Sigmoid colon (tissue), 7 donors: ENCODE measurements at regions of chr5 and their contacts with region 1.

Region 1: GRCh38 chr5:77491783-77492652 is at the start of gene WDR41:
- DNase-seq: peak; percentile 95
- H3K4me3 ChIP-seq: peak within 1 kb of the TSS; percentile 67 to 82 (median 76)
- H3K27ac ChIP-seq: peak within 1 kb of the TSS; percentile 85 to 97 (median 94)
- H3K4me1 ChIP-seq: peaks cover 0 to 13% (median 7%) of the 10 kb centered on the region in 4 donors
- H3K27me3 ChIP-seq: no peaks in the 10 kb centered on the region
- CTCF ChIP-seq: peak; percentile 55 to 96 (median 72)
- EP300 ChIP-seq: no peak
- POLR2A ChIP-seq: peak; percentile 16 to 42
- total RNA-seq, gene WDR41: 36.8 to 65.6 (median 50.2) TPM

Region 2: DNA sequence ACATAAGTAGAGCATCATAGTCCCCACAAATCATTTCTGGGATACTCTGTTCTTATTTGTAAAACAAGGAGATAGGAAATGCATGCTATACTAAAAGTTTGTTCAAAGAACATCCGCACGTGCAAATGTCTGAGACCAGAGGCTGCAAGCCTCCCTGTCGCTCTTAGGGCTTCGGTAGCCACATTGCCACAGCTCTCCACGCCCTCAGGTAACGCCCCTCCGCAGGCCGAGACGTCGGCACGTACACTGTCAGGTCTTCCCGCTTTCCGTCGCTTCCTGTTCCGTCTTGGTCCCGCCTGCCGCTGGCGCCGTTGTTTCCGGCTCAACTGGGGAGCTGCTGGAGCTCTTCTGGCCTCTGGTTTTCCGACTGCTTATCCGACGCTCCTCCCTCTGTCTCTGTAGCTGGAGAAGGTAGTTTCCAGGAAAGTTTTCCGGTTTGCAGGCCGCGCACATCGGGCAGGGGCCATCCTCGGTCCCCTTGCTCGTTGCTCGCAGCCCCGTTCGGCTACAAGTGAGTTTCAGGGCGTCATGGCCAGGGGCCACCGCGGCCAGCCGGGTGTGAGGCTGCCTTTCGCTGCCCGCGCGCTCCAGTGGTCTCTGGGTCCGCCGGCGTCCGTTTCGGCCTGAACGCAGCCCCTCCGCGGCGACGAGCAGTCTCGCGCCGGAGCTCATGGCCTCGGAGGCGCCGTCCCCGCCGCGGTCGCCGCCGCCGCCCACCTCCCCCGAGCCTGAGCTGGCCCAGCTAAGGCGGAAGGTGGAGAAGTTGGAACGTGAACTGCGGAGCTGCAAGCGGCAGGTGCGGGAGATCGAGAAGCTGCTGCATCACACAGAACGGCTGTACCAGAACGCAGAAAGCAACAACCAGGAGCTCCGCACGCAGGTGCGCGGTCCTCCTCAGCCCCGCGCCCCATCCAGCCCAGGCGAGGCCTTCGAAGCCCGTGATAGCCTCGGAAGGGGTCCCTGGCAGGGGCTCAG is 461.6 kb before region 1 on chr5 and contains the start of gene AGGF1:
- intact Hi-C with region 1: loop called (anchors 5 kb)
- DNase-seq: peak; percentile 96
- H3K4me3 ChIP-seq: peak within 1 kb of the TSS; percentile 77 to 94 (median 88)
- H3K27ac ChIP-seq: peak within 1 kb of the TSS; percentile 85 to 95 (median 90)
- H3K4me1 ChIP-seq: peaks cover 0 to 18% (median 14%) of the 10 kb centered on the region in 4 donors
- H3K27me3 ChIP-seq: no peaks in the 10 kb centered on the region
- CTCF ChIP-seq: no peak
- EP300 ChIP-seq: no peak
- POLR2A ChIP-seq: peak; percentile 53 to 69
- total RNA-seq, gene AGGF1: 16.3 to 21.8 (median 17.7) TPM

Region 3: GRCh38 chr5:77076961-77077823 is 414.8 kb before region 1 on chr5:
- intact Hi-C with region 1: loop called (anchors 5 kb)
- DNase-seq: peak; percentile 83
- H3K4me3 ChIP-seq: peak overlapping the region; percentile 25 to 73 (median 60)
- H3K27ac ChIP-seq: peak overlapping the region; percentile 74 to 81 (median 78)
- H3K4me1 ChIP-seq: peaks cover 0 to 11% (median 10%) of the 10 kb centered on the region in 4 donors
- H3K27me3 ChIP-seq: no peaks in the 10 kb centered on the region
- CTCF ChIP-seq: peak in 2 of 4 experiments; percentile 11 to 84
- EP300 ChIP-seq: no peak
- POLR2A ChIP-seq: no peak

Region 4: GRCh38 chr5:77143998-77144836 is 347.8 kb before region 1 on chr5:
- intact Hi-C with region 1: loop called (anchors 1 kb)
- DNase-seq: peak; percentile 86
- H3K4me3 ChIP-seq: no peak overlapping the region
- H3K27ac ChIP-seq: no peak overlapping the region
- H3K4me1 ChIP-seq: no peaks in the 10 kb centered on the region
- H3K27me3 ChIP-seq: no peaks in the 10 kb centered on the region
- CTCF ChIP-seq: peak; percentile 31 to 82 (median 63)
- EP300 ChIP-seq: no peak
- POLR2A ChIP-seq: no peak

Region 5: DNA sequence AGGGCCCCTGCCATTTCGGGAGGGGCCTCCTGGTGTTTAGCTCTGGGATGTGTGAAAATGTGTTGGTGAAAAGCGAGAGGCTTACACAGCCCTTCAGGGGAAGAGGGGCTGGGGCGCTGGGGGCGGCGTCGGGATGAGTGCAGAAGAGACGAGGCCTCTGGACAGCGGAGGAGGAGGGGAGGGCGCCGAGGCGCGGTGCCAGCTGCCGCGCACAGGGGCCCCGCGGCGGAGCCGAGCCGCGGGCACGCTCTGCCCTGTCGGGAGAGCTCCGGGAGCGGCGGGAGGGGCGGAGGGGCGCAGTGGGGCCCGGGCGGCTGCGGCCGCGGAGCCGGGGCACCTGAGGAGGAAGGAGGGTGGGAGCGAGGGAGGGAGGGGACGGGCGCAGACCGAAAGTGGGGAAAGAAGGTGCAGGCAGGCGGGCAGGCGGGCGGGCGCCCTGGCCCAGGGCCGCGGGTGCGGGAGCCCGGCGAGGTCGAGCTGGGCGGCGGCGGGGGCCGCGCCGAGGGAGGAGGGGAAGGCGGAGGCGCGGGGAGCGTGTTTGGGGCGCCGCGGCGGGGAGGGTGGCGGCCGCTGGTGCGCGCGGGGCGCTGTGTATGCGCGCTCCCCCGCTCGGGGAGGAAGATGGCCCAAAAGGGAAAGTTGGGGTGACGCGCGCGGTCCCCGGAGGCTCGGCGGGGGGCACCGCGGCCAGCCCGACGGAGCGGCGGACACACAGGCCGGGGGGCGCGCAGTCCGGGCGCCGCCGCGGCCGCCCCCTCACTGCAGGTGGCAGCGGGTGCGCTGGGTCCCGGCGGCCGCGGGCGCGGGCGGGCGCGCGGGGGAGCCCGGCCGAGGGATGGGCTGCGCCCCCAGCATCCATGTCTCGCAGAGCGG is 281.7 kb before region 1 on chr5 and contains the start of gene PDE8B:
- intact Hi-C with region 1: loop called (anchors 1 kb)
- DNase-seq: no peak
- H3K4me3 ChIP-seq: peak within 1 kb of the TSS; percentile 40 to 86 (median 68)
- H3K27ac ChIP-seq: peak within 1 kb of the TSS in 3 of 4 donors; percentile 29 to 57 (median 43)
- H3K4me1 ChIP-seq: peaks cover 0 to 22% (median 10%) of the 10 kb centered on the region in 4 donors
- H3K27me3 ChIP-seq: peaks cover 0 to 8% (median 3%) of the 10 kb centered on the region in 3 donors
- CTCF ChIP-seq: no peak
- EP300 ChIP-seq: no peak
- POLR2A ChIP-seq: no peak
- total RNA-seq, gene PDE8B: 2.9 to 11.3 (median 6.1) TPM

Region 6: DNA sequence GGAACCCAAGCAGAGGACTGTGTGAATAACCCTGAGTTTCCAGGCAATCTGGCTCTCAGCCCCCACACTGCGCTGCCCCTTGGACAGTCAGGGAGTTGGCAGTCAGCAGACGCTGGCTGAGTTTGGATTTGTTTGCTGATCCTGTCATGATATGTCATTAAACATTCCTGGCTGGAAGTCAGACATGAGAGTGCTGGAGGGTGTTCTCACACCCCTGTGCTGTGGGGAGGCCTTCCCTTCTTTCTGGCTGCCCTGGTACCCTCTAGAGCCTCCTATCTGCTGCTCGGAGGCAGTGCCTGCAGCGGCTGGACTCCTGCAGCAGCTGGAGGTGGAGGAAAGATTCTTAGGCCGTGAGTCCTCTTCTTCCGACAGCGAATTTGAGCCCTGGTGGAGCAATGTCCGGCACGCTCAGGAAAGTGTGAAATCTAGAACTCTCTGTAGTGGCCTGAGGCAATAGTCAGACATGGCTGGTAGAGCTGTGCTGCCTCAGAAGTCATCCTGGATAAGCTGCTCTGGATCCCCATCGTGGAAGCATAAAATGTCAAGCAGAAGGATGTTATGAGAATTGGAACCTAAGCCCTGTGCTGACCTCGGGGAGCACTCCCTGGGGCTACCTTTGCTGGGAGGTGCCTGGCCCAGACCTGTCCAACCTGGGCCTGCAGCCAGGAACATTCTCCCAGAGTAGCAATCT is 209.5 kb before region 1 on chr5:
- intact Hi-C with region 1: no loop called
- DNase-seq: no peak
- H3K4me3 ChIP-seq: no peak overlapping the region
- H3K27ac ChIP-seq: peak overlapping the region in 2 of 4 donors; percentile 27 to 48
- H3K4me1 ChIP-seq: peaks cover 0 to 14% (median 8%) of the 10 kb centered on the region in 4 donors
- H3K27me3 ChIP-seq: no peaks in the 10 kb centered on the region
- CTCF ChIP-seq: peak in 1 of 4 experiments; percentile 23
- EP300 ChIP-seq: no peak
- POLR2A ChIP-seq: no peak

Region 7: DNA sequence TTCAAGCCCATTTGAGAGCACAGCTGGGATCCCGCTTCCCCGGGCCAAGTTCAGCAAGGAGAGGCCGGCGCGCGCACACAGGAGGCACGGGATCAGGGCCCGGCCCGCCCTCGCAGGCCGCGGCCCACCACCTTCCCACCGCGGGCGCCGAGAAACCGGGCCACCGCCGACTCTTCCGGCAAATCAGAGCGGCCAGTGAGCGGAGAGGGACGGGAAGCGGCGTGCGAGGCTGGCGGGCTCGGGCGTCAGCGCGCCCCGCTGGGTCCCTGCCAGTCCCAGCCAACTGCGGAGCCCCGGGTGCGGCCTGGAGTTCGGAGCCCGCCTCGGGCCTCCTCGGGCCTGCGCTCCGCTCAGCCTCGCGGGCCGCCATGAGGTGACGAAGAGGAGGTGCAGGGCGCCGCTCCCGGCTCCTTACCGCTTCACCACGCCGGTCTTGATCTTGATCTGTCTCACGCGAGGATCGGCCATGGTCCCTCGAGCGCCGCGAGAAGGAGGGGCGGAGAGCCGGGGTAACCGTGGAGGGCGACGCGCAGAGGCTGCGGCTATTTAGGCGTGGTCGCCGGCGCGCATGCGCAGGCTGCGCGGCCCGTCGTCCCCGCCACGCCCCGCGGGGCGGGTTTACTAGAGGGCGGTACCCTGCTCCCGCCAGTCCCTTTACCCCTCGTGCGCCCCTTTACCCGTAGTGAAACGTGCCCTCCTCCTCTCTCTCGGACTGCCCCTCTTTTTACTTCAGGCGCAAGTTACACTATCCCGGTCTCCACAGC is 284.0 kb after region 1 on chr5 and contains the start of gene TBCA:
- intact Hi-C with region 1: loop called (anchors 5 kb)
- DNase-seq: peak; percentile 93
- H3K4me3 ChIP-seq: peak within 1 kb of the TSS; percentile 56 to 75 (median 71)
- H3K27ac ChIP-seq: peak within 1 kb of the TSS; percentile 94 to 98 (median 96)
- H3K4me1 ChIP-seq: peaks cover 0 to 49% (median 38%) of the 10 kb centered on the region in 4 donors
- H3K27me3 ChIP-seq: no peaks in the 10 kb centered on the region
- CTCF ChIP-seq: peak in 2 of 4 experiments; percentile 20 to 26
- EP300 ChIP-seq: no peak
- POLR2A ChIP-seq: peak; percentile 77 to 80
- total RNA-seq, gene TBCA: 192 to 231 (median 214) TPM